Activated CD4-positive, alpha-beta memory T cell treated with anti-CD3 and anti-CD28 coated beads for 36 hours (primary cell): ENCODE measurements at regions of chr17 and their contacts with region 1.

Region 1: GRCh38 chr17:58249270-58250133 is 11.1 kb downstream of the LPO start:
- DNase-seq: peak; percentile 83
- H3K4me3 Mint-ChIP-seq: peak overlapping the region; percentile 70
- H3K27ac Mint-ChIP-seq: no peak overlapping the region
- H3K4me1 Mint-ChIP-seq: peaks cover 13% of the 10 kb centered on the region
- H3K27me3 Mint-ChIP-seq: peaks cover 18% of the 10 kb centered on the region

Region 2: DNA sequence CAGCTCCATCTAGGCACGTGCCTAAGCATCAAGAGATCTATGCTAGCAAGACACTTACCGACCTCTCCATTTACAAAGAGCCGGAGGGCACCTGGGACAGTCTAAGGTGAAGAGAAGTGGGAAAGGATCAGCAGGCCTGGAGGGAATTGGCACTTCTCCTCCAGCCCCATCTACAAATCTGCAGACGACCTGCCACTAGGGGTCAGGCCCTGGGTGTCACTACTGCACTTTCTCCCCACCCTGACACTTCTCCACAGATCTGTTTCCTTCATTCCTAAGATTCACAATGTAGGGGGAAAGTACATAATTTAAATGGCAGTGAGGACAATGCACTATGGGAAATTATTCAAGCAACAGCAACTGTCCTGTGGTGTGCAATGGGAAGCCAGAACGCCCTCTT is 38.6 kb before region 1 on chr17:
- CTCF ChIA-PET with region 1: interaction called, 22 read pairs
- POLR2A ChIA-PET with region 1: no interaction called
- intact Hi-C with region 1: no loop called
- DNase-seq: no peak
- H3K4me3 Mint-ChIP-seq: no peak overlapping the region
- H3K27ac Mint-ChIP-seq: no peak overlapping the region
- H3K4me1 Mint-ChIP-seq: no peaks in the 10 kb centered on the region
- H3K27me3 Mint-ChIP-seq: no peaks in the 10 kb centered on the region

Region 3: GRCh38 chr17:58219001-58219788 is 30.3 kb before region 1 on chr17 and contains the start of gene MKS1:
- CTCF ChIA-PET with region 1: interaction called, 22 read pairs
- POLR2A ChIA-PET with region 1: interaction called, 4 read pairs
- intact Hi-C with region 1: no loop called
- DNase-seq: peak; percentile 98
- H3K4me3 Mint-ChIP-seq: peak within 1 kb of the TSS; percentile 95
- H3K27ac Mint-ChIP-seq: peak within 1 kb of the TSS; percentile 93
- H3K4me1 Mint-ChIP-seq: peaks cover 23% of the 10 kb centered on the region
- H3K27me3 Mint-ChIP-seq: no peaks in the 10 kb centered on the region
- total RNA-seq, gene MKS1: 23.5 to 27.3 TPM

Region 4: DNA sequence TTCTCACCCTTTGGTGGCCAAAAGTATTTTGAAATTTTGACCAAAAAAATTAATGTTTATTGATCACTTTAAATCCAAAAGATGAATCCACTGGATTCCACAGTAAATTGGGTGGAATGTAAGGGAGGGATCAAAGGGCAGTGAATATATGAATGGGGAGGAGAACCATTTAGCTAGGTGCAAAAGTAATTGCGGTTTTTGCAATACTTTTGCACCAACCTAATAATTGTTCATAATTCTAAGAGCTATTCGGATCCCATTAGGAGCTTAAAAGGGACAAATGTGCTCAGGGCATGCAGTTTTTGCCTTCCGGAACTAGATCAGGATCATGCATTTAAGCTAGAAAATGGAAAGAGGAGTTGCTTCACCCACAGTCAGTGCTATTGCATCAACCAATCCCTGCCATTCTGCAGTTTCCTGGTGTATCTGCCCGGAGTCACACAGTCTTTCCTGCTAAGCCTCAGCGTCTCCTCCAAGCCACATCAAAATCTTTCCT is 11.3 kb before region 1 on chr17 and contains the start of gene LPO:
- CTCF ChIA-PET with region 1: interaction called, 15 read pairs
- POLR2A ChIA-PET with region 1: no interaction called
- intact Hi-C with region 1: no loop called
- DNase-seq: no peak
- H3K4me3 Mint-ChIP-seq: no peak within 1 kb of the TSS
- H3K27ac Mint-ChIP-seq: no peak within 1 kb of the TSS
- H3K4me1 Mint-ChIP-seq: peaks cover 2% of the 10 kb centered on the region
- H3K27me3 Mint-ChIP-seq: peaks cover 43% of the 10 kb centered on the region
- total RNA-seq, gene LPO: not detected

Region 5: DNA sequence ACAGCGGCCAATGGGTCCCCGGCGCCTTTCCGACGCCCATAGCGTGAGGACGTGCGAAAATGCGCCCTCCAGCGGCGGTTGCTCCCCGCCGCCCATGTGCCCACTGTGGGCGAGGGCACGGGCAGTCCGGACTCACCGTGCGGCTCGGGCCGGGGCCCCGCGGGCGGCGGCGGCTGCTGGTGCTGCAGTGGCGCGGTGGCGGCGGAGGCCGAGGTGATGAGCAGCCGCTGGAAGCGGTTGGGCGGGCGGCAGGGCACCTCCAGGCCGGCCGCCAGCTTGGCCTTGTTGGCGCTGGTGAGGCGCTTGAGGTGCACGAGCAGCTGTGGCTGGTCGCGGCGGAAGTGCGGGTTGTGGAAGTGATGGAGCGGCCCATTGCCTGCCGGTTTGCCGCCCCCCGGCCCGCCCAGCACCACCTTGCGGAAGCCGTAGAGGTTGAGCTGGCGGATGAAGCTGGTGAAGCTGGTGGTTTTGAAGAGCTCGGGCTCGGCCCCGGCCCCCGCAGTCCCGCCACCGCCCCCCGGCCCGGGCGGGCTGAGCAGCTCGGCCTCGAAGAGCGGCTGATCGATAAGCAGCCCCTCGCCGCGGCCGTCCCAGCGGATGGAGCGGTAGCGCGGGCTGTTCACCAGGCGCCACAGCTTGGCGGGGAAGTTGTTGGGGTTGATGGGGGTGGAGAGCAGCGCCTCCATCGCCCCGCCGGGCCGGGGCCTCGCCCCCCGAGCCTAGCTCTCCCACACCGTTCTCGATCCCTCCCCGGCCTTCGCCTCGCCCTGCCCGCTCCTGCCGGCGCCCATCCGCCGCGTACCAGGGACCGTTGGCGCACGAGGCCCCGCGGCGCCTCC is 238.3 kb after region 1 on chr17 and contains the start of gene HSF5:
- CTCF ChIA-PET with region 1: interaction called, 14 read pairs
- POLR2A ChIA-PET with region 1: no interaction called
- intact Hi-C with region 1: no loop called
- DNase-seq: peak; percentile 81
- H3K4me3 Mint-ChIP-seq: peak within 1 kb of the TSS; percentile 50
- H3K27ac Mint-ChIP-seq: peak within 1 kb of the TSS; percentile 28
- H3K4me1 Mint-ChIP-seq: peaks cover 15% of the 10 kb centered on the region
- H3K27me3 Mint-ChIP-seq: no peaks in the 10 kb centered on the region
- total RNA-seq, gene HSF5: 2.9 to 3.0 TPM